Panc1 (cell line): ENCODE measurements at regions of chr6 and their contacts with region 1.

Region 1: DNA sequence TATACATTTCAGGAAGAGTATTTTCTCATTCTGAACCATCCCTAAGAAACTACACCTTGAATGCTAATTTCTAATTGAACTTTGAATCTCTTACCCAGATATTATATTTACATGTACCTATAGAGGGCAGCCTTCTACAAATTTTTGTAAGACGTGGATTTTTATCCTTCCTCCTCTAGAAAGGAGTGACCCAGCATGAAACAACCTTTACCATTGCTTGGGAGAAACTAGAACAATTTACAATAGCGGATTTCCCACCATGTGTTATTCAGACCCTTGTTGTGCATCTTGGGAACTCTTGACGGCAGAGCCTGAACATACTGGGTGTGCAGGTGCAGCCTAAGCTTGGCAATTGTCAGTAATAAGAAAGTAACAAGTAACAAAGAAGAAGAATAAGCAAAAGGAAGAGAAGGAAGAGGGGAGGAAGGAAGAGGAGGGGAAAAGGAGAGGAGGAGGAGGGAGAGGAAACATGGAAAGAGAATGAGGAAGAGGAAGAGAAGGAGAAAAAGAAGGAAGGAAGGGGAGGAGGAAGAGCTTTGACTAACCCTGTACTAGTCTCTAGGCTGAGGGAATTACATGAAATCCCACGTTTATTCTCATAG is 10.8 kb upstream of the TAAR1 start:
- DNase-seq: peak; percentile 24
- ATAC-seq: peak; percentile 76; the same call in 1 of the 2 replicates
- H3K4me3 ChIP-seq: no peak overlapping the region
- H3K27ac ChIP-seq: no peak overlapping the region
- H3K4me1 ChIP-seq: no peaks in the 10 kb centered on the region
- H3K27me3 ChIP-seq: no peaks in the 10 kb centered on the region
- CTCF ChIP-seq: peak; percentile 66

Region 2: GRCh38 chr6:132798869-132799538 is 129.2 kb after region 1 on chr6:
- CTCF ChIA-PET with region 1: interaction called, 3 read pairs
- POLR2A ChIA-PET with region 1: no interaction called
- in situ Hi-C with region 1: no loop called
- intact Hi-C with region 1: loop called (anchors 1 kb)
- DNase-seq: no peak
- ATAC-seq: peak; percentile 96
- H3K4me3 ChIP-seq: peak overlapping the region; percentile 53 to 66
- H3K27ac ChIP-seq: no peak overlapping the region
- H3K4me1 ChIP-seq: peaks cover 4% of the 10 kb centered on the region; the same call in 1 of the 2 replicates
- H3K27me3 ChIP-seq: no peaks in the 10 kb centered on the region
- CTCF ChIP-seq: no peak; the same call in 1 of the 2 replicates